ENCODE measurements at regions of chr6 and their contacts with region 1.

Region 1: DNA sequence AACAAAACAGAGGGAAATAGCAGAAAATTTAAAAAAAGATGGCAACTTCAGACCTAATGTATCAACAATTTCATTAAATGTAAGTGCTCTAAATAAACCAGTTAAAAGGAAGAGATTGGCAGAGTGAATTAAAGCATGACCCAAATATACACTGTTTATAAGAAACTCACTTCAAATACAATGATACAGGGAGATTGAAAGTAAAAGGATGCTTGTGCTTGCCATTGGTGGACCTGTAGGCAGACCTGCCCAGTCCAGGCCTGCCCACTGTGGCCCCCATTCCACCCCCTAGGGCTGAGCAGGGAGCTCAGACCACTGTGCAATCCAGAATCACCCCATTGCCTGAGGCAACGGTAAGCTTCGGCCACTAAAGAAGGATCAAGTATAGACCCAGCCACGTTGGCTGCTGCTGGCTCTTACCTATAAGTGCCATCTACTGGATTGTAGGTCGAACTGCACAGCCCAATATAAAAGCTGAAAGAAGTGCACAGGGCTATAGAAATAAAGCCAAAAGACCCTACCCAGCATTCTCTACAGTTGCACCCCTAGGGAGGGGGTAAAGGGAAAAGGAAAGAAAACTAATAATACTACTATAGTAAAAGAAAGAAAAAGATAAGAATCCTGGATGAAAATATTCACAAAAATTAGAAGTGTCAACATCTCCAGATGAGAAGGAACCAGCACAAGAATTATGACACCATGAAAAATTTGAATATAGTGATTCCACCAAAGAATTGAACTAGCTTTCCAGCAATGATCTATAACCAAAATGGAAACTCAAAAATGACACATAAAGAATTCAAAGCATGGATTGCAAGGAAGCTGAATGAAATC is 36.1 kb downstream of the PSMB1 start:
- DNase-seq: peak in 7 of 42 donors; percentile 12 to 54 (median 31)

Region 2: GRCh38 chr6:169831450-169832246 is 685.4 kb before region 1 on chr6:
- intact Hi-C with region 1: loop called (anchors 5 kb)
- DNase-seq: peak; percentile 36 to 94 (median 82)

Region 3: DNA sequence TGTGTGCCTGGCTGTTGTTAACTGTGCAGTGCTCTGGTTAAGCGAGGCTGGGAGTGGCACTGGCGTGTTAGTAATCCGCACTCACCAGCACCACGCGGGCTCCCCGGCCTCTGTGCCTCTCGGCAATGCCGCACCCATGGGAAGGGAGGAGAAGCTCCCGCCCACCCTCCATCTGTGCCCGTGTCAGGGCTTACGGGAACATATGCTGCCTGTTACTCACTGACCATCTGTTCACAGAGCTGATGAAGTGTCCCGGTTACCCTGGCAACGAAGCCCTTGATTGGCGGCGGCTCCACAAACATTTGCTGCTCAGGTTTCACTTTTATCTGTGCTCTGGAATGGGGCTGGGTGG is 78.6 kb before region 1 on chr6:
- intact Hi-C with region 1: no loop called
- DNase-seq: peak; percentile 39 to 91 (median 70)